Natural killer cell (primary cell): ENCODE measurements at regions of chr11 and their contacts with region 1.

Region 1: DNA sequence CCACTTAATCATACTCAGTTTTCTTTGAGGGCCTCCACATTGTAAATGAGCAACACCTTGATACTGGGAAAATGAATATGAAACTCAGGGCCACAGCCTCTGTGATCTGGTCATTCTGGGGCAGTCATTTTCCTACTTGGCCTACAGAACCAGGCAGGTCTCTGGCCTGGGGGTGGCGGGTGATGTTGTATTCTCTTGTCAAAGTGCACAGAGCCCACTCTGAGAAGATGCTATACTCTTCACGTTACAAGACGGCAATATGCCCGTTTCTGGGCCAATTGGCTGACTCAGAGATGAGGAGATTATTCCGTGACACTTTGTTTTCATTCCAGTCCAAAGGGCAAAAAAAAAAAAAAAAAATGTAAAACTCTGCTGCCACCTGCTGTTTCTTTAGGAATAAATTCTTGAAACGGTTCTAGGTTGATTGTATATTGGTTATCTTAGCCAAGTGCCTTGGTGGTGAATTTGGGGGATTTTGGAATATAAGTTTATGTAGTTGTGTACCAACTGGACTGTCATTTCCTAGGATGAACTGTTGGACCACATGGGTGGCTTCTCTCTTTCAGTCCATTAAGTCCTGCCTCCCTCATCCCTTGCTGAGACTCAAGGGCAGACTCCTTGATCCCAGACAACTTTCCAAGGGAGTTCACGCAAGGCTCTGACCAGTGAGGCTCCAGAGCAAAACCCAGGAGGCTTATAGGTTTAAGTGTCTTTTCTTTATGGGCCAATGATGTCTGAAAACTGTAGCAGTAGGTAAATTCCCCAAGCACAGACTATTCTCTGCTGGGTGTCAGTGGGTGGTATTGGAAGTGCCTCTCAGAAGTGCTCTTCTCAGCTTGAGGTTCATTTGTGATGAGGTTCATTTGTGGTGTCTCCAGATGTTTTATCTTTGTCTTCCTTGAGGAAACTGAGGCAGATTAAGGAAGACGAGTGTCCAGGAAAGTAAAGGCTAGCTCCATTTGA is 18.2 kb downstream of the ADM start:
- DNase-seq: peak in 1 of 2 donors; percentile 69
- ATAC-seq: peak; percentile 49 to 83 (median 60)
- H3K4me3 ChIP-seq: no peak overlapping the region
- H3K4me3 Mint-ChIP-seq: no peak overlapping the region
- H3K27ac ChIP-seq: no peak overlapping the region
- H3K27ac Mint-ChIP-seq: peak overlapping the region in 1 of 2 donors; percentile 73
- H3K4me1 ChIP-seq: no peaks in the 10 kb centered on the region
- H3K4me1 Mint-ChIP-seq: no peaks in the 10 kb centered on the region
- H3K27me3 ChIP-seq: no peaks in the 10 kb centered on the region
- H3K27me3 Mint-ChIP-seq: peaks cover 16 to 21% of the 10 kb centered on the region in 2 donors
- CTCF ChIP-seq: peak; percentile 59

Region 2: DNA sequence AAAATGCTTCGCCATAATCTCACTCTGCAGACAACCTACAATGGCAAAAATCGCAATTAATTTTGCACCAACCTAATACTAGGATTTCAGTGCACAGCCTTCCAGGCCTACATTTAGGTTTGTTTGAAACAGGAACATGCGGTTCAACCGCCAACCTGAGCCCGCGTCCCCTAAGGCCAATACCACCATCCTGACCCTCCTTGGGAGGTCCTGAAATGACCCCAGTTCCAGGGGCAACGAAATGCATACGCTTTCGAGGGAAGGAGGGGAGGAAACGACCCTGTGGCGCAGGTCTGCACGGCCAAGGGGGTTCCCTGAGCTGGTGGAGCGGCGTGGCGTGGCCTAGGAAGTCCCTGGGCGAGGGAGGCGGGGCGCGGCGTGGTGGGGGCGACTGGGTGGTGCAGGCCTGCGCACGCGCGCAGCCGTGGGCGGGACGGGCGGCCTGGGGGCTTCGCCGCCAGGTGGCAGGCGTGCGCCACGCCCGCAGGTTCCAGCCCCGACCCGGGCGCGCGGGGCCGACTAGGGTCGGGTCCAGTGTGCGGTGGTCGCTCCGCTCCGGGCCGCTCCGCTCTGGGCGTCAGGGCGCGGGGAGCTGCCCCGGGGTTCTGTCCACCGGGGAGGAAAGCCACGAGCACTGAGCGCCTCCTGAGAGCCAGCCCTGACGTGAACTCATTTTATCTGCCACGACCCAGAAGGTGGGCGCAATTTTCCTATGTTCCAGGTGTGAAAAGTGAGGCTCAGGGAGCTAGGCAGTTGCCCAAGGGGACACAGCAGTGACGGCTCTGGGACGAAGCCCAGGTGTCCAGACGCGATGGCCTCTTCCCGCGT is 565.1 kb before region 1 on chr11:
- intact Hi-C with region 1: loop called (anchors 2 kb)
- DNase-seq: peak; percentile 92 to 97
- ATAC-seq: peak; percentile 87 to 96 (median 94)
- H3K4me3 ChIP-seq: peak overlapping the region; percentile 71
- H3K4me3 Mint-ChIP-seq: peak overlapping the region; percentile 87
- H3K27ac ChIP-seq: peak overlapping the region; percentile 58
- H3K27ac Mint-ChIP-seq: peak overlapping the region; percentile 83 to 84
- H3K4me1 ChIP-seq: peaks cover 40% of the 10 kb centered on the region
- H3K4me1 Mint-ChIP-seq: peaks cover 16 to 30% of the 10 kb centered on the region in 2 donors
- H3K27me3 ChIP-seq: no peaks in the 10 kb centered on the region
- H3K27me3 Mint-ChIP-seq: no peaks in the 10 kb centered on the region
- CTCF ChIP-seq: peak; percentile 91

Region 3: GRCh38 chr11:10139656-10140055 is 183.5 kb before region 1 on chr11:
- intact Hi-C with region 1: no loop called
- DNase-seq: no peak
- ATAC-seq: no peak
- H3K4me3 ChIP-seq: no peak overlapping the region
- H3K4me3 Mint-ChIP-seq: no peak overlapping the region
- H3K27ac ChIP-seq: no peak overlapping the region
- H3K27ac Mint-ChIP-seq: no peak overlapping the region
- H3K4me1 ChIP-seq: no peaks in the 10 kb centered on the region
- H3K4me1 Mint-ChIP-seq: peaks cover 0 to 4% of the 10 kb centered on the region in 2 donors
- H3K27me3 ChIP-seq: no peaks in the 10 kb centered on the region
- H3K27me3 Mint-ChIP-seq: no peaks in the 10 kb centered on the region
- CTCF ChIP-seq: no peak

Region 4: GRCh38 chr11:10208131-10208575 is 115.0 kb before region 1 on chr11:
- intact Hi-C with region 1: loop called (anchors 1 kb)
- DNase-seq: peak in 1 of 2 donors; percentile 73
- ATAC-seq: peak; percentile 58 to 74 (median 68)
- H3K4me3 ChIP-seq: no peak overlapping the region
- H3K4me3 Mint-ChIP-seq: no peak overlapping the region
- H3K27ac ChIP-seq: no peak overlapping the region
- H3K27ac Mint-ChIP-seq: no peak overlapping the region
- H3K4me1 ChIP-seq: no peaks in the 10 kb centered on the region
- H3K4me1 Mint-ChIP-seq: no peaks in the 10 kb centered on the region
- H3K27me3 ChIP-seq: no peaks in the 10 kb centered on the region
- H3K27me3 Mint-ChIP-seq: no peaks in the 10 kb centered on the region
- CTCF ChIP-seq: peak; percentile 77